HepG2 (cell line): ENCODE measurements at regions of chr12 and their contacts with region 1.

Region 1: DNA sequence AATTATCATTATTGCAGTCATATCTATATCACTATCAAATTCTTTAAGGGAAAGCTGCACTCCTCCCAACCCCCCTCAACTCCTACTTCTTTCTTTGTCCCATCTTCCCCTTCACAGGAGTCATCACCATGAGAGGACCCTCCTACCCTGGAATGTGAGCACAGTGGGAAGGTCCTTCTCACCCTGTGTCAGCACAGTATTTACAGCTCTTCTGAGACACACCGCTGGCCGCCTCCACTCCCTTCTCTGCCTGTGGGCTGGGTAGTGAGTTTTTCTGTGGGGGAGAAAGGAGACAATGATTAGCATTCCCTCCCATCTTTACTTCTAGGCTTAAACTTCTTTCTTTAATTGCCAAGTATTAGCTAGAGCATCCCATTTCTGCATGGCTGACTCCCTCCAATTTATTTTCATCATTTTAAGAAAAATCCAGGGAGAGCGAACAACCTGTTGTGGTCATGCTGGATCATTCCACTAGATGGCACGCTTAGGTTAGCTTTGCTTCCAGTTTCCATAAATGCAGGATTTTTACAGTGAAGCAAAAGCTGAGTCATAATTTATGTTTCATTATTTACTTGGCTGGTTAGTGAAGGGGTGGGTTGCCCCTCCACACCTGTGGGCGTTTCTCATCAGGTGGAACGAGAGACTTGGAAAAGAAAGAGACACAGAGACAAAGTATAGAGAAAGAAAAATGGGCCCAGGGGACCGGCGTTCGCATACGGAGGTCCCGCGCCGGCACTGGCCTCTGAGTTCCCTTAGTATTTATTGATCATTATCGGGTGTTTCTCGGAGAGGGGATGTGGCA is 188.5 kb downstream of the ALX1 start:
- DNase-seq: peak; percentile 25
- ATAC-seq: peak; percentile 90
- H3K4me3 ChIP-seq: peak overlapping the region; percentile 28 to 38 (median 29); a peak in 4 of 6 replicates
- H3K27ac ChIP-seq: no peak overlapping the region
- H3K4me1 ChIP-seq: peaks cover 11% of the 10 kb centered on the region
- H3K27me3 ChIP-seq: no peaks in the 10 kb centered on the region
- CTCF ChIP-seq: peak; percentile 78
- EP300 ChIP-seq: no peak
- POLR2A ChIP-seq: no peak
- RAD21 ChIP-seq: peak; percentile 55

Region 2: DNA sequence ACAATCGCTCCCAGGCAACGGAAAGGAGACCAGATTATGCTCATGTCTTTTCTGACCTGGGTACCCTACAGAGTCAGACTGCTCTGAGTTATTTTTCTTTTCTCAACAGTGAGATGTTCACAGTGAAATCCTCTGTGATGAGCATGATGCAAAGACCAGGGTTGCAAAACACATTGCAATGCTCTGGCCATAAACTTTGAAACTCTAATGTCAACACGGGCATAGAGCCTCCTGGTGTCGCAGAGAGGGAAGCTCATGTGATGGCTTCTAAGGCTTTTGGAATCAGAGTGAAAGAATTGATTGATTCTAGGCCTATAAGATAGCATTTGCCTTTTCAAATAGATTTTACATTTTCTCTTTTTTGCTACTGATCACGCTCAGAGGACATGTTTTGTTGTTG is 174.3 kb after region 1 on chr12:
- CTCF ChIA-PET with region 1: no interaction called
- POLR2A ChIA-PET with region 1: no interaction called
- in situ Hi-C with region 1: no loop called
- intact Hi-C with region 1: loop called (anchors 1 kb)
- DNase-seq: peak; percentile 75
- ATAC-seq: peak; percentile 100
- H3K4me3 ChIP-seq: no peak overlapping the region
- H3K27ac ChIP-seq: no peak overlapping the region
- H3K4me1 ChIP-seq: peaks cover 9% of the 10 kb centered on the region; the same call in 1 of the 2 replicates
- H3K27me3 ChIP-seq: no peaks in the 10 kb centered on the region
- CTCF ChIP-seq: peak; percentile 84
- EP300 ChIP-seq: peak; percentile 30 to 36; a peak in 2 of 4 replicates
- POLR2A ChIP-seq: no peak
- RAD21 ChIP-seq: peak; percentile 76

Region 3: DNA sequence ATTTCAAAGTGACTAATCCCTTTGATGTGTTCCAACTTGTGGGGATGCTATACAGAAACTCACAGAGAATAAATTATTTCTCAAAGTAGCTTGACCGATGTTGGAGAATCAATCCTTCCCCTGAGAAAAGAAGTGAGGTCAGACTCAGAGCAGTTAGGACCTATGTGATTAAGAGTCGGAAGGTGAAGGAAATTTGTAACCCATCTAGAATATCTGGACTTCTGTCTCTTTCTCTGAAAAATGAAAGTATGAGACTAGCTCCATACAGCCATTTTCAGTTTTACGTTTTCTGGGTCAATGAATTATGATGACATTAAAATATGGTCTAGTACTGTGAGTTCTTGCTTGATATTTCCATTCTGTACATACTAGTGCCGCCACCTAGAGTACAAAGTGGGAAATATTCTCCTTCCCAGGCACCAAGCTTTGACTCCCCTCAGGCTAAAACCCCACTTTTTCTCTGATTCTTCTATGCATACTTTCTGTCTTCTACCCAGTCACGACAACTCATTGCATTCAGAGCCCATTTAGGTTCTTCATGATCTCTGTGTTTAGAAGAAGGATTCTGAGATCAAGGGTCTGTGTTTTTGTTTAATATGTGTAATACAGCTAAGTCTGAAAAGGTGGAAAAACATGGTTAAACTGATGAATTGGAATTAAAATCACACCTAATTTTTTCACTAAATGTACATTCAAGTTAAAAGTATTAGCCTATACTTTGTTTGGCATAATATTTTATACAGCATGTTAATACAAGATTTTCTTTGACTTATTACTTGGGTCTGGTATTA is 398.6 kb after region 1 on chr12:
- CTCF ChIA-PET with region 1: interaction called, 8 read pairs
- POLR2A ChIA-PET with region 1: no interaction called
- in situ Hi-C with region 1: loop called (anchors 5 kb)
- intact Hi-C with region 1: loop called (anchors 1 kb)
- DNase-seq: peak; percentile 48
- ATAC-seq: peak; percentile 84
- H3K4me3 ChIP-seq: no peak overlapping the region
- H3K27ac ChIP-seq: no peak overlapping the region
- H3K4me1 ChIP-seq: no peaks in the 10 kb centered on the region
- H3K27me3 ChIP-seq: no peaks in the 10 kb centered on the region
- CTCF ChIP-seq: peak; percentile 74
- EP300 ChIP-seq: no peak
- POLR2A ChIP-seq: no peak
- RAD21 ChIP-seq: 0 out of 2 replicates have a peak, but pooled peaks have one; percentile 34

Region 4: DNA sequence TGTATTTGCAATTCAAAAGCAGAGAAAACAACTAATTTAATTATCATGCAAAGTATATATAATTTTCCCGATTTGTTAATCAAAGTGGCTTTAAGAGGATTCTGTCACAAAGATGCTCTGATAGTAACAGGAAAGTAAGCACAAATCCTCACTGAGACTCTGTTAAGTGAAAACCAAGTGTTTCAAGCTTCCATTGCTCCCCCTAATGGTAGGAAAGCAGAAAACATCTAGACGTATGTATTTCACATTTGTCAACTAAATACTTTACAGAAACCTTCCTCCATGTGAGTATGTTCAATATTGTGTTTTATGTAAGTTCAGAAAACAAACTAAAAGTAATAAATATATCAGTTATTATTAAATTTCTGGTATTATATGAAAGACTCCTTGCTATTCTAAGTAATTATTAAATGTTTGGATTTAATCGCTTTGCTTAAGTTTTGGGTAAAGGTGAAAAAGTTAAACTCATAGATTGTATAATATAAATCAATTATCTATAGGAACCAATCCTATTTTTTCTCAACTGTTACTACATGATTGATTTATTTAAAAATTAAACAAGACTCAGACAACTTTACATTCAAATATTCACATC is 404.0 kb after region 1 on chr12:
- CTCF ChIA-PET with region 1: interaction called, 8 read pairs
- POLR2A ChIA-PET with region 1: no interaction called
- in situ Hi-C with region 1: loop called (anchors 5 kb)
- intact Hi-C with region 1: loop called (anchors 1 kb)
- DNase-seq: peak; percentile 47
- ATAC-seq: peak; percentile 68
- H3K4me3 ChIP-seq: no peak overlapping the region
- H3K27ac ChIP-seq: no peak overlapping the region
- H3K4me1 ChIP-seq: no peaks in the 10 kb centered on the region
- H3K27me3 ChIP-seq: no peaks in the 10 kb centered on the region
- CTCF ChIP-seq: peak; percentile 70
- EP300 ChIP-seq: no peak
- POLR2A ChIP-seq: no peak
- RAD21 ChIP-seq: no peak

Region 5: DNA sequence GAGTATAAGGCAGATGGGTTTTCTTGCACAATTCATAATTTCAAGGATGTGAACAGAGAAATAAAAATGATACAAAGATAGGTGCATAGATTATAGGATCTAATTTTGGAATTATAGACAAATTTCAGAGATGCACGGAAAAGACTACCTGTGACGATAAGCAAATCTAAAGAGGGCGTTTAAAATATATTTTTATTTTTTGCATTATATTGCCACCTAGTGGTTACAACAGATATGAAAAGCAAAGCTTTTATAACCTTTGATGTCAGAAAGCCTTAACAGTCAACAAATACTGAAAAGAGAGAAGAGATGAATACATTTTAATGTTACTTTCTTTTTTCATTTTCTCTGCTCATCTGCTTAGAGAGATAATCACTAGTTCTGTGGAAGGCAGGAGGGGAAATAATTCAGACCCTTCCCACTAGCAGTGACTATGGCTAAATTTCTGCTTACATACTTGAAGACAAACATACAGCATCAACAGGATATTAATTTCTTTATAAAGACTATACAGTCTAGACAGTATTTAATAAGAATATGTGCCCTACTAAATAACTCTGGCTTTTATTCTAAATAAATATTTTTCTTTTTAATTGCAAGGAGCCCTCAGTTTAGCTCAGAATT is 451.9 kb after region 1 on chr12:
- CTCF ChIA-PET with region 1: interaction called, 11 read pairs
- POLR2A ChIA-PET with region 1: no interaction called
- in situ Hi-C with region 1: no loop called
- intact Hi-C with region 1: loop called (anchors 1 kb)
- DNase-seq: peak; percentile 12
- ATAC-seq: no peak
- H3K4me3 ChIP-seq: no peak overlapping the region
- H3K27ac ChIP-seq: no peak overlapping the region
- H3K4me1 ChIP-seq: no peaks in the 10 kb centered on the region
- H3K27me3 ChIP-seq: no peaks in the 10 kb centered on the region
- CTCF ChIP-seq: peak; percentile 46
- EP300 ChIP-seq: no peak
- POLR2A ChIP-seq: no peak
- RAD21 ChIP-seq: no peak